Mammary epithelial cell (primary cell): ENCODE measurements at regions of chr7 and their contacts with region 1.

Region 1: GRCh38 chr7:25093268-25093826 is 31.7 kb downstream of the CYCS start:
- DNase-seq: peak; percentile 65
- H3K4me3 ChIP-seq: no peak overlapping the region
- H3K27ac ChIP-seq: no peak overlapping the region
- H3K4me1 ChIP-seq: peaks cover 3% of the 10 kb centered on the region
- H3K27me3 ChIP-seq: no peaks in the 10 kb centered on the region
- CTCF ChIP-seq: peak; percentile 66 to 95

Region 2: DNA sequence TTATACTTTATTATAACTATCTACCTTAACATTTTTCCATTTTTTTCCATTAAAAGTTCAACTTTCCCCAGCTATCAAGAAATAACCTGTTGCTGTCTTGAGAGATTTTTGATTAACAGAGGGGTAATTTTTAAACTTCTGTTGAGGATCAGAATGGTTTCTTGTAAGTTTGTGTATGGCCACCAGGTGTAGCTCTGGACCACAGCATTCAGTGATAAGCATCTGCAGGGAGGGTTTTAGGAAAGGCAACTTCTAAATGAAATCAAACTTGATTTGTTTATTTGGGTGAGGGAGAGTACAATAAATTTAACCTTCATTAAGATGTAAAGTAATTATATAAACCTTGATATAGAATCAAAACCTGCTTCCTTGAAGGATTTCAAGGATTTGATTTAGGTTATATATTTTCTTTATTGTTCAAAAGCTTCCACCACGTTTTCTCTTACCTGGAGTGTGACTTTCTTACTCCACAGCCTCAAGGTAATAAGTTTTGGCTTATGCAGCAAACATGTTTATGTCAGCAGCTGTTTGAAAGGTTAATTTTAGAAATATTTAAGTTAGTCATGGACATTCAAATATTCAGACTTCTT is 1230.0 kb before region 1 on chr7:
- CTCF ChIA-PET with region 1: no interaction called
- dilution Hi-C with region 1: no loop called
- in situ Hi-C with region 1: loop called in 1 of 2 experiments (anchors 25 kb)
- intact Hi-C with region 1: loop called (anchors 2 kb)
- DNase-seq: peak; percentile 20
- H3K4me3 ChIP-seq: no peak overlapping the region
- H3K27ac ChIP-seq: no peak overlapping the region
- H3K4me1 ChIP-seq: no peaks in the 10 kb centered on the region
- H3K27me3 ChIP-seq: no peaks in the 10 kb centered on the region
- CTCF ChIP-seq: peak; percentile 73 to 94

Region 3: GRCh38 chr7:24401628-24402593 is 691.4 kb before region 1 on chr7:
- CTCF ChIA-PET with region 1: no interaction called
- dilution Hi-C with region 1: no loop called
- in situ Hi-C with region 1: no loop called
- intact Hi-C with region 1: loop called (anchors 1 kb)
- DNase-seq: peak; percentile 30
- H3K4me3 ChIP-seq: peak overlapping the region; percentile 29 to 40 (median 35)
- H3K27ac ChIP-seq: peak overlapping the region; percentile 33
- H3K4me1 ChIP-seq: peaks cover 16% of the 10 kb centered on the region
- H3K27me3 ChIP-seq: no peaks in the 10 kb centered on the region
- CTCF ChIP-seq: peak; percentile 45 to 61

Region 4: DNA sequence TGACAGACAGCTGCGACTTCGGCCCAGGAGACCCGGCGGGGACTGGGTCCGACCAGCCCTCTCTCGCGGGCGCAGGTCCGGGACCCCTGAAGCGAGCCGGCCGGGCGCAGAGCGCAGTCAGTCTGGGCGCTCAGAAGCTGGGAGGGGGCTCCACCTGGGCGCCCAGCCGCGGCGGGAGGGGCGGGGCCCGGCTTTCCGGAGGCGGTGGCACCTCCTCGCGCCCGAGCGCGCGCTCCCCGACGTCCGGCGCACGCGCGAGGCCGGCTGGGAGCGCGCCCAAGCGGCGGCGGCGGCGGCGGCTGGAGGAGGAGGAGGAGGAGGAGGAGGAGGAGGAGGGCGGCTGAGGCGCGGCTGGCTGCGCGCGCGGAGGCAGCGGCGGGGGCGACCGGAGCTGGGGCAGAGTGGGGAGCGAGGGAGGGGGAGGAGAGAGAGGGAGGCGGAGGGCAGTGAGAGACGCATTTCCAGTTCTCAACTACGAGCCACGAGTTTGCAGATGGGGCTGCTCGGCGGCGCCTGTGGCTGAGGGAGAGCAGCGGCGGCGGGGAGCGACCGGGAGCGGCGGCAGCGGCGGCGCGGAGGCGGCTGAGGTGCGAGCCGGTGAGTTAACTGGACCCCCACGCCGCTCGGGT is 520.2 kb before region 1 on chr7 and contains the start of gene PALS2:
- CTCF ChIA-PET with region 1: no interaction called
- dilution Hi-C with region 1: no loop called
- in situ Hi-C with region 1: no loop called
- intact Hi-C with region 1: loop called (anchors 2 kb)
- DNase-seq: peak; percentile 80
- H3K4me3 ChIP-seq: peak within 1 kb of the TSS; percentile 84 to 91 (median 88)
- H3K27ac ChIP-seq: peak within 1 kb of the TSS; percentile 90
- H3K4me1 ChIP-seq: peaks cover 17% of the 10 kb centered on the region
- H3K27me3 ChIP-seq: no peaks in the 10 kb centered on the region
- CTCF ChIP-seq: no peak
- total RNA-seq, gene PALS2: 36.2 to 39.5 TPM

Region 5: GRCh38 chr7:24812310-24812945 is 280.9 kb before region 1 on chr7:
- CTCF ChIA-PET with region 1: interaction called, 22 read pairs
- dilution Hi-C with region 1: no loop called
- in situ Hi-C with region 1: loop called (anchors 5 to 10 kb)
- intact Hi-C with region 1: loop called (anchors 1 kb)
- DNase-seq: peak; percentile 39
- H3K4me3 ChIP-seq: no peak overlapping the region
- H3K27ac ChIP-seq: no peak overlapping the region
- H3K4me1 ChIP-seq: no peaks in the 10 kb centered on the region
- H3K27me3 ChIP-seq: no peaks in the 10 kb centered on the region
- CTCF ChIP-seq: peak; percentile 83 to 92

Region 6: GRCh38 chr7:25069900-25070443 is 23.4 kb before region 1 on chr7:
- CTCF ChIA-PET with region 1: interaction called, 6 read pairs
- dilution Hi-C with region 1: no loop called
- in situ Hi-C with region 1: no loop called
- intact Hi-C with region 1: loop called (anchors 1 kb)
- DNase-seq: peak; percentile 45
- H3K4me3 ChIP-seq: no peak overlapping the region
- H3K27ac ChIP-seq: no peak overlapping the region
- H3K4me1 ChIP-seq: no peaks in the 10 kb centered on the region
- H3K27me3 ChIP-seq: no peaks in the 10 kb centered on the region
- CTCF ChIP-seq: peak; percentile 77 to 84